GM12878 (cell line): ENCODE measurements at regions of chr3 and their contacts with region 1.

Region 1: GRCh38 chr3:17645072-17645698 is 97.2 kb downstream of the TBC1D5 start:
- DNase-seq: no peak
- ATAC-seq: peak; percentile 65
- H3K4me3 ChIP-seq: no peak overlapping the region
- H3K27ac ChIP-seq: no peak overlapping the region
- H3K4me1 ChIP-seq: no peaks in the 10 kb centered on the region
- H3K27me3 ChIP-seq: no peaks in the 10 kb centered on the region
- CTCF ChIP-seq: peak; percentile 45 to 54 (median 53); a peak in 5 of 6 replicates
- EP300 ChIP-seq: no peak
- POLR2A ChIP-seq: no peak
- RAD21 ChIP-seq: peak; percentile 59

Region 2: GRCh38 chr3:17032407-17033034 is 612.7 kb before region 1 on chr3:
- CTCF ChIA-PET with region 1: no interaction called
- POLR2A ChIA-PET with region 1: no interaction called
- RAD21 ChIA-PET with region 1: no interaction called
- SMC1A ChIA-PET with region 1: no interaction called
- in situ Hi-C with region 1: no loop called
- intact Hi-C with region 1: no loop called
- DNase-seq: no peak
- ATAC-seq: peak; percentile 81
- H3K4me3 ChIP-seq: no peak overlapping the region
- H3K27ac ChIP-seq: no peak overlapping the region
- H3K4me1 ChIP-seq: peaks cover 15% of the 10 kb centered on the region
- H3K27me3 ChIP-seq: no peaks in the 10 kb centered on the region
- CTCF ChIP-seq: peak; percentile 54 to 64 (median 54); a peak in 5 of 6 replicates
- EP300 ChIP-seq: no peak
- POLR2A ChIP-seq: no peak
- RAD21 ChIP-seq: peak; percentile 76

Region 3: GRCh38 chr3:17629400-17629799 is 15.8 kb before region 1 on chr3:
- CTCF ChIA-PET with region 1: interaction called, 15 read pairs
- POLR2A ChIA-PET with region 1: no interaction called
- RAD21 ChIA-PET with region 1: interaction called, 4 read pairs
- SMC1A ChIA-PET with region 1: interaction called, 8 read pairs
- in situ Hi-C with region 1: no loop called
- intact Hi-C with region 1: no loop called
- DNase-seq: no peak
- ATAC-seq: no peak
- H3K4me3 ChIP-seq: no peak overlapping the region
- H3K27ac ChIP-seq: no peak overlapping the region
- H3K4me1 ChIP-seq: no peaks in the 10 kb centered on the region
- H3K27me3 ChIP-seq: no peaks in the 10 kb centered on the region
- CTCF ChIP-seq: no peak
- EP300 ChIP-seq: no peak
- POLR2A ChIP-seq: no peak
- RAD21 ChIP-seq: no peak

Region 4: GRCh38 chr3:17686613-17687012 is 41.4 kb after region 1 on chr3:
- CTCF ChIA-PET with region 1: interaction called, 17 read pairs
- POLR2A ChIA-PET with region 1: no interaction called
- RAD21 ChIA-PET with region 1: interaction called, 8 read pairs
- SMC1A ChIA-PET with region 1: no interaction called
- in situ Hi-C with region 1: no loop called
- intact Hi-C with region 1: no loop called
- DNase-seq: no peak
- ATAC-seq: peak; percentile 48
- H3K4me3 ChIP-seq: no peak overlapping the region
- H3K27ac ChIP-seq: no peak overlapping the region
- H3K4me1 ChIP-seq: no peaks in the 10 kb centered on the region
- H3K27me3 ChIP-seq: no peaks in the 10 kb centered on the region
- CTCF ChIP-seq: peak; percentile 21 to 32 (median 26); a peak in 3 of 6 replicates
- EP300 ChIP-seq: no peak
- POLR2A ChIP-seq: no peak
- RAD21 ChIP-seq: peak; percentile 58

Region 5: GRCh38 chr3:17742108-17742879 is 97.1 kb after region 1 on chr3 and contains the start of gene TBC1D5:
- CTCF ChIA-PET with region 1: interaction called, 10 read pairs
- POLR2A ChIA-PET with region 1: interaction called, 3 read pairs
- RAD21 ChIA-PET with region 1: interaction called, 4 read pairs
- SMC1A ChIA-PET with region 1: interaction called, 4 read pairs
- in situ Hi-C with region 1: no loop called
- intact Hi-C with region 1: loop called (anchors 5 kb)
- DNase-seq: peak; percentile 91
- ATAC-seq: peak; percentile 82
- H3K4me3 ChIP-seq: peak within 1 kb of the TSS; percentile 94
- H3K27ac ChIP-seq: peak within 1 kb of the TSS; percentile 94
- H3K4me1 ChIP-seq: peaks cover 13% of the 10 kb centered on the region
- H3K27me3 ChIP-seq: no peaks in the 10 kb centered on the region
- CTCF ChIP-seq: peak in 1 of 3 experiments; percentile 6; a peak in 1 of 6 replicates
- EP300 ChIP-seq: no peak
- POLR2A ChIP-seq: peak; percentile 90
- RAD21 ChIP-seq: no peak
- polyA plus RNA-seq, gene TBC1D5: 5.5 to 5.8 TPM

Region 6: DNA sequence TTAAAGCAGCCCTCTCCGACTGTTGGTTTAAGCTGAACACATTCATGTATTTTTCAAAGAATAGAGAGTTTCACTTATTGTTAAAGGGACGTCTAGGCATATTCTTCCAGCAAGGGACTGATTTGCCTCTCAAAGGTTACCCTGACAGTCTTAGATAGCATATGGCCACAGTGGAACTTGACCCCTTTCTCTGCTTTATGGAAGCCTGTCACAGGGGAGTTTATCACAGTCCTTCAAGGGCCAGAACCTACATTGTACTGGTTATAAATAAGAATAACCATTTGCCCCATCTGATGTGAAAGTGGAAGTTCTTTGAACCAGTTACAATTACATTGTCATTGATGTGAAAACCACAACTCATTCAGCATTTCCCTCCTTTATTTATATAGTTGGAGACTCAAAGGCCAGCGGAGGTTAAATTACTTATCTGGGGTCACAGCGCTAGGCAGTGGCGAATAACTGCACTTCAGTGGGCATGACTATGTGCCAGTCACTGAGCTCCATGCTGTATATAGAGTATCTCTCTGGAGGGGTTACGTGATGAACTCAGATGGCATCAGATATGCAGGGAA is 157.7 kb after region 1 on chr3:
- CTCF ChIA-PET with region 1: interaction called, 10 read pairs
- POLR2A ChIA-PET with region 1: no interaction called
- RAD21 ChIA-PET with region 1: interaction called, 4 read pairs
- SMC1A ChIA-PET with region 1: interaction called, 13 read pairs
- in situ Hi-C with region 1: no loop called
- intact Hi-C with region 1: no loop called
- DNase-seq: peak; percentile 20
- ATAC-seq: peak; percentile 89
- H3K4me3 ChIP-seq: no peak overlapping the region
- H3K27ac ChIP-seq: no peak overlapping the region
- H3K4me1 ChIP-seq: no peaks in the 10 kb centered on the region
- H3K27me3 ChIP-seq: no peaks in the 10 kb centered on the region
- CTCF ChIP-seq: peak in 2 of 3 experiments; percentile 23 to 26; a peak in 2 of 6 replicates
- EP300 ChIP-seq: no peak
- POLR2A ChIP-seq: no peak
- RAD21 ChIP-seq: peak; percentile 48